ENCODE measurements at regions of chr4 and their contacts with region 1.

Region 1: DNA sequence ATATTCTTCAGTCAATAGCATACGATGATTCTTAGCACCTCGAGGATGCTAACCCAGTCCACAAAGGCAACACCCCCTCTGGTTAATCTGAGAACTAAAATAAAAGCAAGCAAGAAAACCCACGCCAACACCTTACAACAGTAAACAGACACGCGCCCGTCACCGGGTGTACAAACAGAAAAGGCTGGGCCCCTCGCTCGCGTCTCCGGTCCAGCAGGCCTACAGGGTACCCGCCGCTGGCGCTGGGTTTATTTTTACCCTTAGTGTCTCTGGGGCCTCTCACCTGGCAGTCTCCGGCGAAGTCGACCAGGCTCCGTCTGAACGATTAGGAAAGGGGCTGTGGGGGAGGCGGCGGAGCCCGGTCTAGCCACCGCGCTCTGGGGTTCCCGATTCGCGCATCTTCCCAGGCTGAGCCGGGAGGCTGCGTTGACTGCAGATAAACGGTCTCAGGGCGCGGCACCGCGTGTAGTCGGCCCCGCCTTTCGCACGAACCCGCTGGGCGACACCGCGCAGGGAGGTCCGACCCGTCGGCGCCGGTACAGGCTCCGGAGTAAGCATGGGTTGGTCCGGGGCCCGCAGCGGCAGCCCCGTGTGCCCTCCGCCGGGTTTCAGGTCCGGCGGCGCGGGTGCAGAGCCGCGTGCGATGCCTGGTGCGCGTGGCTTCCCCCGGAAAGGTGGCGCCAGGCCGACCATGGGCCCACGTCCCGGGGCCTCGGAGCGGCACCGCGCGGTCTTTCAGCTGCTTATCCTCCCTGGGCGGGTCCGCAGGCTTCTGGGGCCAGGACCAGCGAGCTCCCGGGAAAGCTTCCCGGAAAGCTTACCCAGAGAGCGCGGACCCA is 441 bp downstream of the SLC9B2 start:
- DNase-seq: peak; percentile 43 to 80 (median 58)
- ATAC-seq: peak; percentile 81
- H3K4me3 ChIP-seq: peak overlapping the region; percentile 81
- H3K4me3 Mint-ChIP-seq: peak overlapping the region; percentile 88
- H3K27ac ChIP-seq: peak overlapping the region; percentile 78 to 88
- H3K27ac Mint-ChIP-seq: peak overlapping the region; percentile 94
- H3K4me1 ChIP-seq: peaks cover 17% of the 10 kb centered on the region
- H3K4me1 Mint-ChIP-seq: peaks cover 59% of the 10 kb centered on the region
- H3K27me3 ChIP-seq: no peaks in the 10 kb centered on the region
- H3K27me3 Mint-ChIP-seq: no peaks in the 10 kb centered on the region
- CTCF ChIP-seq: no peak

Region 2: DNA sequence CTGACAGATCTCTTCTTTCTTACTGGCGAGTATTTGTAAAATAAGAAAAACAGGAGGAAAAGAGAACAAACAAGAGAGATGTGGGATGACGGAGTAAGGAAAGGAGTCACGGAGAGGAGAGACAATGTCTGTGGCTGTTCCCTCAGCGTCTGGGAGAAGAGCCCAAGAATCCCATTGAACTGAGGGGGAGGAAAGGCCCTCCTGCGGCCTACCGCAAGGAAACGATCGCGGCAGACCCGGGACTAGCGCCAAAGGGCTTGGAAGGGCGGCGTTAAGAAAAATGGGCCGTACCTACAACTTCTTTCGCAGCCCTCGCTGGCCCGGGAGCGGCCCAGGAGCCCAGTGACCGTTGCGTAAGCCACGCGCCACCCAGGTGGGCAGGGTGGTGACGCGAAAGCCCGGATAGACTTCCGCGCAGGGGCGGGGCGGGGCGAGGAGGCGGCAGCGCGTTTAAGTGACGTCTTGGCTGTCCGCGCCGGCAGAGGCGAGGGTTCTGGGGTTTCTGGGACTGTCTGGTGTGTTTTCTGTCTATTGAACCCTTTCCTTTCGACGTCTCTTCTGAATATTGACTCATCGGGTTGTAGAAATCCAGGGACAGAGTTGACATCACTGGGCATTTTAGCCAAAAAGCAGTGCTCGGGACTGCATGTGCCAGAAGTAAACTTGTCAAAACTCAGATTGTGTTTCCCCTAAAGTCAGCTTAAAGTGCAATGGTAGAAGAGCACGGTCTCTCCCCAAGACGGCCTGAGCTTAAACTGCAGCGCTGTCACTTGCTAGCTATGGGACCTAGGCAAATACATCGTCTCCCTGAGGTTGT is 56.6 kb before region 1 on chr4 and contains the start of gene SLC9B1:
- CTCF ChIA-PET with region 1: no interaction called
- POLR2A ChIA-PET with region 1: interaction called, 10 read pairs
- intact Hi-C with region 1: loop called (anchors 1 to 5 kb)
- DNase-seq: peak; percentile 84 to 96 (median 91)
- ATAC-seq: peak; percentile 89
- H3K4me3 ChIP-seq: peak within 1 kb of the TSS; percentile 64
- H3K4me3 Mint-ChIP-seq: peak within 1 kb of the TSS; percentile 91
- H3K27ac ChIP-seq: peak within 1 kb of the TSS; percentile 65 to 94
- H3K27ac Mint-ChIP-seq: peak within 1 kb of the TSS; percentile 99
- H3K4me1 ChIP-seq: peaks cover 22% of the 10 kb centered on the region
- H3K4me1 Mint-ChIP-seq: peaks cover 25% of the 10 kb centered on the region
- H3K27me3 ChIP-seq: no peaks in the 10 kb centered on the region
- H3K27me3 Mint-ChIP-seq: no peaks in the 10 kb centered on the region
- CTCF ChIP-seq: no peak
- total RNA-seq, gene SLC9B1: 3.6 to 3.7 TPM

Region 3: DNA sequence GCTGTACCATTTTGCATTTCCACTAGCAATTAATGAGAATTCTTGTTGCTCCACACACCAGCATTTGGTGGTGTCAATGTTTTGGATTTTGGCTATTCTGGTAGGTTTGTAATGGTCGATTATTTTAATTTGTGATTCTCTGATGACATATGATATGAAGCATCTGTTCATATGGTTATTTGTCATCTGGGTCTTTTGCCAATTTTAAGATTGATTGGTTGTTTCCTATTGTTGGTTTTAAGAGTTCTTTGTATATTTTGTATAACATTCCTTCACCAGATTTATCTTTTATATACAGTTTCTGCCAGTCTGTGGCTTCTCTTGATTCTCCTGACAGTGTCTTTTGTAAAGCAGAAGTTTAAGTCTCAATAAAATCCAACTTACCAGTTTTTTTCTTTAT is 42.0 kb after region 1 on chr4:
- CTCF ChIA-PET with region 1: no interaction called
- POLR2A ChIA-PET with region 1: no interaction called
- intact Hi-C with region 1: no loop called
- DNase-seq: no peak
- ATAC-seq: no peak
- H3K4me3 ChIP-seq: no peak overlapping the region
- H3K4me3 Mint-ChIP-seq: no peak overlapping the region
- H3K27ac ChIP-seq: no peak overlapping the region
- H3K27ac Mint-ChIP-seq: no peak overlapping the region
- H3K4me1 ChIP-seq: no peaks in the 10 kb centered on the region
- H3K4me1 Mint-ChIP-seq: no peaks in the 10 kb centered on the region
- H3K27me3 ChIP-seq: no peaks in the 10 kb centered on the region
- H3K27me3 Mint-ChIP-seq: no peaks in the 10 kb centered on the region
- CTCF ChIP-seq: no peak